Activated T-helper 1 cell treated with anti-CD3 and anti-CD28 coated beads, Interleukin-12 subunit alpha, Interleukin-12 subunit beta, Interleukin-2, Interleukin-4 antibody, amounts not matched to agents 30 ng/mL and 10 ng/mL and 1 ng/mL, durations not matched to agents 14 hours and 24 hours and 36 hours (primary cell): ENCODE measurements at regions of chr9 and their contacts with region 1.

Region 1: GRCh38 chr9:15191378-15191777 is 115.6 kb downstream of the TTC39B start:
- DNase-seq: no peak
- H3K4me3 Mint-ChIP-seq: peak overlapping the region; percentile 45
- H3K27ac Mint-ChIP-seq: peak overlapping the region; percentile 49
- H3K4me1 Mint-ChIP-seq: peaks cover 24% of the 10 kb centered on the region
- H3K27me3 Mint-ChIP-seq: no peaks in the 10 kb centered on the region

Region 2: DNA sequence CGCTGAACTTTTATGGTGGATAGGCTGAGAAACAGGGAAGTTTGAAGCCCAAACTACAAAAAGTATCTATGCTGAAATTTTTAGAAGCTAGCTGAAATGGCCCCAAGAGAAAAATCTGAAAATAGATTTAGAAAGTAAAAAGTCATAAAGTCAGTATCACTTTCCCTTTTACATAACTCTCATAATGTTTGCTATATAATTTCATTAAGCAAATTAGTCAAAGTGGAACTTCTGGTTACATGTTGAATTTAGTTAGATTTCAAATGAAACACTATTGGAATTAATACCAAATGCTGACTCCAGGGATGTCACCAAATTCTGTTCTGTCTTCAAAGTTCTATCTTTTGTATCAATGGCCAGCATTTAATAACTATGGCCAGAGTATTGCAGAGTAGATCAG is 11.3 kb before region 1 on chr9:
- intact Hi-C with region 1: loop called (anchors 1 kb)
- DNase-seq: no peak
- H3K4me3 Mint-ChIP-seq: no peak overlapping the region
- H3K27ac Mint-ChIP-seq: no peak overlapping the region
- H3K4me1 Mint-ChIP-seq: peaks cover 9% of the 10 kb centered on the region
- H3K27me3 Mint-ChIP-seq: no peaks in the 10 kb centered on the region

Region 3: GRCh38 chr9:15205632-15206420 is 14.4 kb after region 1 on chr9:
- intact Hi-C with region 1: loop called (anchors 2 kb)
- DNase-seq: no peak
- H3K4me3 Mint-ChIP-seq: no peak overlapping the region
- H3K27ac Mint-ChIP-seq: peak overlapping the region; percentile 38
- H3K4me1 Mint-ChIP-seq: peaks cover 31% of the 10 kb centered on the region
- H3K27me3 Mint-ChIP-seq: no peaks in the 10 kb centered on the region